ENCODE measurements at regions of chr18 and their contacts with region 1.

Region 1: GRCh38 chr18:22563098-22563707 is 145.5 kb upstream of the CTAGE1 start:
- DNase-seq: no peak
- H3K4me3 ChIP-seq: no peak overlapping the region
- H3K27ac ChIP-seq: no peak overlapping the region
- H3K4me1 ChIP-seq: peaks cover 18% of the 10 kb centered on the region
- H3K27me3 ChIP-seq: no peaks in the 10 kb centered on the region
- CTCF ChIP-seq: peak; percentile 68 to 77 (median 73)
- POLR2A ChIP-seq: no peak

Region 2: GRCh38 chr18:22348521-22349316 is 214.5 kb before region 1 on chr18:
- intact Hi-C with region 1: loop called (anchors 2 kb)
- DNase-seq: peak in 1 of 2 donors; percentile 84
- H3K4me3 ChIP-seq: peak overlapping the region; percentile 48 to 59
- H3K27ac ChIP-seq: peak overlapping the region; percentile 76
- H3K4me1 ChIP-seq: peaks cover 18% of the 10 kb centered on the region
- H3K27me3 ChIP-seq: no peaks in the 10 kb centered on the region
- CTCF ChIP-seq: no peak
- POLR2A ChIP-seq: no peak

Measured in vagina (tissue), 2 donors.